IMR-90 (cell line): ENCODE measurements at regions of chr6 and their contacts with region 1.

Region 1: DNA sequence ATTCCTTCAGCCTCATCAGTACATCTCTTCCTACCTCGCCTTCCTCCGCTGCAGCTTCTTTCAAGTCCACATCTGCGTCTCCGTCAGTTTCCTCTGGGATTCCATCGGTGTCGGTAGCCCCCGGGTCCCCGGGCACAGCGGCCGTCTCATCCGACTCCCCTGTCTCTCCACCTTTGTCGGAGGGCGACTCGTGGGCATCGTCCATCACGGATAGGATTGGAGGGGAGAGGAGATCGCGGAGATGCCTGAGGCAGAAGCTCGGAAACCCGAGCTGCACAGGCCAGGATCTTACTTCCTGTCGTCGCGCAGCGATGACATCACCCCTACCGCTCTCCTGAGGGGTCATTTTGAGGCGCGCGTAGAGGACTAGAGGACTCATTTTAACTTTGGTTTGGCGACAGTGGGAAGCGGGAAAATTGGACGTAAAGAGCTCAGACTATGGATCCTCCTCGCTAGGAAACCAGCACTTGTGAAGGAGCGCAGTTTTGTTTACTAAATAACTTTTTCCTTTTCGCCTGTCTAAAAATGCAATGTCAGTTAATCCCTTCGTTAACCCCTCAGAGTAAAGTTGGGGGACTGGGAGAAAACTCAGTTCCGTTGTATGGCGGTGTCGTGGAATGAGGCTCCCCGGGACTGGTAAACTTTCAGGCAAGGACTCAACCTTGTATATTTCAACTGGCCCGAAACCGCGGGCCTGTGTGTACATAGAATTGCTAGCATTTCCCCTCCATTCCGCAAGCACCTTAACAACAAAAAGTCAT is at the start of gene TAF11:
- DNase-seq: peak; percentile 96
- ATAC-seq: peak; percentile 92
- H3K4me3 ChIP-seq: peak within 1 kb of the TSS; percentile 80
- H3K27ac ChIP-seq: peak within 1 kb of the TSS; percentile 85
- H3K4me1 ChIP-seq: no peaks in the 10 kb centered on the region
- H3K27me3 ChIP-seq: no peaks in the 10 kb centered on the region
- CTCF ChIP-seq: no peak
- POLR2A ChIP-seq: peak; percentile 88
- RAD21 ChIP-seq: peak; percentile 4; the same call in 1 of the 2 replicates
- total RNA-seq, gene TAF11: 12.7 and 24.2 TPM in 2 replicates

Region 2: GRCh38 chr6:34970957-34971356 is 83.0 kb after region 1 on chr6:
- CTCF ChIA-PET with region 1: interaction called, 3 read pairs
- POLR2A ChIA-PET with region 1: no interaction called
- dilution Hi-C with region 1: no loop called
- in situ Hi-C with region 1: no loop called
- intact Hi-C with region 1: loop called (anchors 2 kb)
- DNase-seq: peak; percentile 85
- ATAC-seq: peak; percentile 75
- H3K4me3 ChIP-seq: no peak overlapping the region
- H3K27ac ChIP-seq: peak overlapping the region; percentile 29; the same call in 1 of the 2 replicates
- H3K4me1 ChIP-seq: peaks cover 13% of the 10 kb centered on the region
- H3K27me3 ChIP-seq: no peaks in the 10 kb centered on the region
- CTCF ChIP-seq: no peak
- POLR2A ChIP-seq: no peak
- RAD21 ChIP-seq: no peak

Region 3: GRCh38 chr6:35048631-35049083 is 160.7 kb after region 1 on chr6:
- CTCF ChIA-PET with region 1: no interaction called
- POLR2A ChIA-PET with region 1: interaction called, 3 read pairs
- dilution Hi-C with region 1: no loop called
- in situ Hi-C with region 1: no loop called
- intact Hi-C with region 1: loop called (anchors 2 kb)
- DNase-seq: peak; percentile 94
- ATAC-seq: peak; percentile 34
- H3K4me3 ChIP-seq: no peak overlapping the region
- H3K27ac ChIP-seq: peak overlapping the region; percentile 79; the same call in 1 of the 2 replicates
- H3K4me1 ChIP-seq: peaks cover 41% of the 10 kb centered on the region
- H3K27me3 ChIP-seq: no peaks in the 10 kb centered on the region
- CTCF ChIP-seq: peak; percentile 21; the same call in 1 of the 2 replicates
- POLR2A ChIP-seq: no peak
- RAD21 ChIP-seq: no peak

Region 4: GRCh38 chr6:35139908-35140655 is 252.1 kb after region 1 on chr6:
- CTCF ChIA-PET with region 1: interaction called, 3 read pairs
- POLR2A ChIA-PET with region 1: no interaction called
- dilution Hi-C with region 1: no loop called
- in situ Hi-C with region 1: no loop called
- intact Hi-C with region 1: loop called (anchors 1 kb)
- DNase-seq: peak; percentile 82
- ATAC-seq: peak; percentile 72
- H3K4me3 ChIP-seq: no peak overlapping the region
- H3K27ac ChIP-seq: no peak overlapping the region
- H3K4me1 ChIP-seq: peaks cover 2% of the 10 kb centered on the region; the same call in 1 of the 2 replicates
- H3K27me3 ChIP-seq: no peaks in the 10 kb centered on the region
- CTCF ChIP-seq: peak; percentile 90
- POLR2A ChIP-seq: no peak; the same call in 1 of the 2 replicates
- RAD21 ChIP-seq: peak; percentile 98

Region 5: GRCh38 chr6:35240840-35241801 is 353.2 kb after region 1 on chr6:
- CTCF ChIA-PET with region 1: no interaction called
- POLR2A ChIA-PET with region 1: no interaction called
- dilution Hi-C with region 1: no loop called
- in situ Hi-C with region 1: no loop called
- intact Hi-C with region 1: loop called (anchors 1 kb)
- DNase-seq: peak; percentile 44
- ATAC-seq: peak; percentile 87
- H3K4me3 ChIP-seq: no peak overlapping the region
- H3K27ac ChIP-seq: no peak overlapping the region
- H3K4me1 ChIP-seq: peaks cover 5% of the 10 kb centered on the region; the same call in 1 of the 2 replicates
- H3K27me3 ChIP-seq: no peaks in the 10 kb centered on the region
- CTCF ChIP-seq: peak; percentile 94
- POLR2A ChIP-seq: no peak
- RAD21 ChIP-seq: peak; percentile 96